ENCODE measurements at regions of chr11 and their contacts with region 1.

Region 1: DNA sequence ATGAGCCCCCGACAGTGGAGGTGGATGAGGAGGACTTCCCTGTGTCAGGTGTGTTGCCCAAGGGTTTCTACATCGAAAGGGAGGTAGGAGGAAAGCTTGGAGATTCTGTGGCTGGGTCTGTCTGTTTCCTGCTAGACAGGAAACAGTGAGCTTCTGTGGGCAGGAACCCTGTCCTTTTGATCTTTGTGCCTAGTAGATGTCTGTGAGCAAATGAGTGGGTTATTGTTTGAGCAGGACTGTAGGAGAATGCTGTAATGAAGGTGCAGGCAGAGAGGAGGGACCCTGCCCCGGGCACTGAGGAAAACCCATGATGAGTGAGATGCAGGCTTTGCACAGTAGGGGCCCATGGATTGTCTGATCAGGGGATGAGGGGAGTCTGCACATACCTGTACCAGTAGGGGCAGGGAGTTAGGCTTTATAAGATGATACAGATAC is 14.0 kb downstream of the USP35 start:
- DNase-seq: peak; percentile 63
- ATAC-seq: peak; percentile 90
- H3K4me3 Mint-ChIP-seq: peak overlapping the region; percentile 88
- H3K27ac Mint-ChIP-seq: peak overlapping the region; percentile 97
- H3K4me1 Mint-ChIP-seq: peaks cover 30% of the 10 kb centered on the region
- H3K27me3 Mint-ChIP-seq: no peaks in the 10 kb centered on the region

Region 2: GRCh38 chr11:78139422-78140391 is 63.0 kb before region 1 on chr11 and contains the start of gene ALG8:
- POLR2A ChIA-PET with region 1: interaction called, 29 read pairs
- DNase-seq: peak; percentile 95
- ATAC-seq: peak; percentile 98
- H3K4me3 Mint-ChIP-seq: peak within 1 kb of the TSS; percentile 93
- H3K27ac Mint-ChIP-seq: peak within 1 kb of the TSS; percentile 92
- H3K4me1 Mint-ChIP-seq: peaks cover 44% of the 10 kb centered on the region
- H3K27me3 Mint-ChIP-seq: no peaks in the 10 kb centered on the region
- total RNA-seq, gene ALG8: 36.7 to 44.3 TPM

Region 3: GRCh38 chr11:78188286-78189173 is 14.2 kb before region 1 on chr11 and contains the starts of genes KCTD21 and USP35:
- POLR2A ChIA-PET with region 1: interaction called, 43 read pairs
- DNase-seq: peak; percentile 92
- ATAC-seq: peak; percentile 93
- H3K4me3 Mint-ChIP-seq: peak within 1 kb of the TSS; percentile 100
- H3K27ac Mint-ChIP-seq: peak within 1 kb of the TSS; percentile 94
- H3K4me1 Mint-ChIP-seq: peaks cover 41% of the 10 kb centered on the region
- H3K27me3 Mint-ChIP-seq: no peaks in the 10 kb centered on the region
- total RNA-seq, gene KCTD21: 7.1 to 8.6 TPM
- total RNA-seq, gene USP35: 13.4 to 13.5 TPM

Region 4: GRCh38 chr11:78219493-78220217 is 16.9 kb after region 1 on chr11:
- POLR2A ChIA-PET with region 1: no interaction called
- DNase-seq: no peak
- ATAC-seq: no peak
- H3K4me3 Mint-ChIP-seq: no peak overlapping the region
- H3K27ac Mint-ChIP-seq: no peak overlapping the region
- H3K4me1 Mint-ChIP-seq: peaks cover 16% of the 10 kb centered on the region
- H3K27me3 Mint-ChIP-seq: no peaks in the 10 kb centered on the region

Region 5: DNA sequence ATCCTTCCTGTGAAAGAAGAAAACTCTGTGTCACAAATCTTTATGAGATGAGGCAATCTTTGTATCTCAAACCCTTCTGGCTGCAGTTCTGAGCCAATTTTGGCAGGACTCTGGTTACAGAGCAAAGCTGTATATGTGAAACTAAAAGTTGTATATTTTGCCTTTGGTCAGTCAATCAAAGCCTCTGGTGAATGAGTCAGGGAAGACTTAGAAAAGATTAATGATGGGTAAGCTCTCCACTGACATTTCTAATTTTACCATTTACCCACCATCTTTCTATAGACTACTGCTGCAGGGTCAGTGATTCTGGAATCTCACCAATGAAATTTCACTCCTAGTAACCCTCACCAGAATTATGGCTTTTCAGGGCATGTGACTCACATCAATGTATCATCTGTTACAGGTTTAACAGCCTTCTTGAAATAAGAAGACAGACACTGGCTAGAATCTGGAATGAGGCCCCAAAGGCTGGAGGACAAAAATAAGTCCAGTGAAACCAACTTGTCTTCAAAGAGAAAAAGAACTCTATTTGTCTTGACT is 29.3 kb after region 1 on chr11:
- POLR2A ChIA-PET with region 1: no interaction called
- DNase-seq: no peak
- ATAC-seq: no peak
- H3K4me3 Mint-ChIP-seq: no peak overlapping the region
- H3K27ac Mint-ChIP-seq: no peak overlapping the region
- H3K4me1 Mint-ChIP-seq: peaks cover 17% of the 10 kb centered on the region
- H3K27me3 Mint-ChIP-seq: no peaks in the 10 kb centered on the region

Region 6: DNA sequence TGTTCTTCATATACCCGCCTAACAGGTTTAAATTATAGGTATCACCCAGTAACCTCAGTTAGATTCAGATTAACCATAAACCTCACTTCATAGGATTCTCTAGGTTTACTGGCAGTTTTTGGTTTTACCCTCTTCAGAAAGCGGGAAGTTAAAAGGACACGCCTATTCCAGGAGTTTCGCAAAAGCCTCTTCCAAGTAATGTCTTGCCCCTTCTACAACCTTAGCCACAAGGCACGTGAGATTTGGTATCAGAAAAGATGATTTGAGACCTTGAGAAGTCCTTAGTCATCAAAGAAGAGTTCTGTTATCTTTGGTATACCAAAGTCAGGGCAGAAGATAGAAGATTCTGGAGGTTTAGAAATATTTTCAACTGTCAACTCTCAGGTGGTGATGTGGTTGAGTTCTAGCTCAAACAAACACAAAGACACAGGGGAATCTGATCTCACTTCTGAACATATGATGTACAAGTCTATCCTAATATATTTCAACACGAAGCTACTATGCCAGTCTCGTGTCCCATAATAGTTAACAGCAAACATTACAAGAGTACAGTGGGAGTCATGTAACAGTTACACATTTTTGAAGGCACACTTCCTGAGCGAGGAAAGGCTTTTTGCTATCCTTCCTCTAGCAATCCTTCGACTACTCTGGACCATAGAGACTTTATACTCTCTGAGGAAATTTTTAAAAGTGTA is 89.5 kb after region 1 on chr11:
- POLR2A ChIA-PET with region 1: interaction called, 11 read pairs
- DNase-seq: no peak
- ATAC-seq: peak; percentile 60
- H3K4me3 Mint-ChIP-seq: peak overlapping the region; percentile 65
- H3K27ac Mint-ChIP-seq: peak overlapping the region; percentile 85
- H3K4me1 Mint-ChIP-seq: peaks cover 39% of the 10 kb centered on the region
- H3K27me3 Mint-ChIP-seq: no peaks in the 10 kb centered on the region

Measured in activated naive CD8-positive, alpha-beta T cell treated with anti-CD3 and anti-CD28 coated beads, Interleukin-2, amount 10 ng/mL, durations not matched to agents 7 days and 5 days (primary cell).